PC-9 (cell line): ENCODE measurements at regions of chr3 and their contacts with region 1.

Region 1: DNA sequence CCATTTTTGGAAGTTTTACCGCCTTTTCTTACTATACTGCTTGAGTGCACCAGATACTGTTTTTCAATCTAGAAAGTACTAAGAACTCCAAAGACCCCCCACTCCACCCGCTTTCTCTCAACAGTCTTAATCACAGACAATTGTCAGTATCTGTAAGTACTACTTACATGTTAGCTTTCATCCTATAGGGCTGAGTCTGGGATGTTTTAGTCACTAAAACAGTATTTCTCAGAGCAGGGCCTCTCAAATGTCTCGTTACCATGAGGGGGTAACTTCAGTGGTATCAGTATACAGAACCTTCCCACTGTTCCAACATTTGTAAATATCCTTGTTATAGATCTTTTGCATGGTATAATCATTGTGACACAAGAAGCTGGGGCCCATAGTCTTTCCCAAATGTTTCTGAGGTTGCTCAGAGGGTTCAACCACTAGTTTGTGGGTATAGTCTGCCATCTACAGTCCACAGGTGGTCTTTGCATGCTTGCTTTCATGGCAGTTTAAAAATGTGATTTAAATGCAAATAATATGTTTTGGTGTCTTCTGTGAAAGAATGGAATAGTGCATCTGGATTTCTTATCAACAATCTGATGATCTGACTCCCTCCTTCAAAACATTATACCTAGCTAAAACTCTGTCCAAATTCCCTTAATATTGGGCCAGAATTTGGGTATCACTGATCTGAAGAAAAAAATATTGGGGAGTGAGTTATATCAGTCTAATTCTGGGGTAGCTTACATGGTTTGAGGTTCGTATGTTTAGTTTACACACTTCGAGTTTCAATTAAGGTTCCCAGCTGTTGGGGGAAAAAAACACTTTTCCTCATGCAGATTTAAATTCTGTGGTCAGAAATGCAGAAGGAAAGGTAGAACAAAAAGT is 18.0 kb upstream of the DNAJC13 start:
- DNase-seq: peak; percentile 42 to 43
- H3K4me3 ChIP-seq: no peak overlapping the region
- H3K27ac ChIP-seq: no peak overlapping the region
- H3K4me1 ChIP-seq: no peaks in the 10 kb centered on the region
- H3K27me3 ChIP-seq: no peaks in the 10 kb centered on the region
- CTCF ChIP-seq: peak; percentile 91

Region 2: GRCh38 chr3:131794766-131795388 is 604.4 kb before region 1 on chr3:
- CTCF ChIA-PET with region 1: no interaction called
- POLR2A ChIA-PET with region 1: no interaction called
- intact Hi-C with region 1: loop called (anchors 5 kb)
- DNase-seq: peak; percentile 32 to 44
- H3K4me3 ChIP-seq: no peak overlapping the region
- H3K27ac ChIP-seq: no peak overlapping the region
- H3K4me1 ChIP-seq: peaks cover 8% of the 10 kb centered on the region
- H3K27me3 ChIP-seq: no peaks in the 10 kb centered on the region
- CTCF ChIP-seq: peak; percentile 87

Region 3: GRCh38 chr3:132034486-132035464 is 364.5 kb before region 1 on chr3 and contains the start of gene CPNE4:
- CTCF ChIA-PET with region 1: no interaction called
- POLR2A ChIA-PET with region 1: no interaction called
- intact Hi-C with region 1: loop called (anchors 2 kb)
- DNase-seq: peak; percentile 71 to 89
- H3K4me3 ChIP-seq: peak within 1 kb of the TSS; percentile 52
- H3K27ac ChIP-seq: no peak within 1 kb of the TSS
- H3K4me1 ChIP-seq: no peaks in the 10 kb centered on the region
- H3K27me3 ChIP-seq: no peaks in the 10 kb centered on the region
- CTCF ChIP-seq: peak; percentile 89
- total RNA-seq, gene CPNE4: 0.10 and 0.22 TPM in 2 replicates

Region 4: DNA sequence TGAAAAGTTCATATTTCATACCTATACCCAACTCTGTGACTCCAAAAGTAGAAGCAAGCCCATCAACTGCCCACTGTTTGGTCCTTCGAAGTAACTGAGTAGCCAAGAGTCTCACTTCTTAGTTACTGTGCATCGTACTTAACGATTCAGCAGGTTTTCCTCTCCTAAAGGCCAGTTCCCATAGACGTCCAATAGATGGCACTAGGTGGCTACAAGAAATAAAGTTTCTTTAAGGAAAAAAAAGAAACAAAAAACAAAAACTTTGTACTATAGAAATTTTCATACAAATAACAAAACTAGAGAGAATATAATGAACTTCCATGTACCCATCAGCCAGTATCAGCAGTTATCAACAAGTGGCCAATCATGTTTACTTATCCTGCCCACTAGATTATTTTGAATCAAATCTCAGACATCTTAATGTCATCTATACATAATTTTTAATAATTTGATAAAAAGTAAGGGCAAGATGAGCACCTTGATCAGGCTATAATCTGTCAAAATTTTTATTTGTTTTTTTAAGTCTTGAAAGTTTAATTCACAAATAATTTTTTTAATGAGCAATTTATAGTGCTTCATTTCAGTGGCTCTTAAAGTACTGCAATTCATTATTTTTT is 145.9 kb before region 1 on chr3:
- CTCF ChIA-PET with region 1: interaction called, 3 read pairs
- POLR2A ChIA-PET with region 1: no interaction called
- intact Hi-C with region 1: loop called (anchors 1 kb)
- DNase-seq: peak; percentile 16 to 56
- H3K4me3 ChIP-seq: no peak overlapping the region
- H3K27ac ChIP-seq: no peak overlapping the region
- H3K4me1 ChIP-seq: peaks cover 34% of the 10 kb centered on the region
- H3K27me3 ChIP-seq: no peaks in the 10 kb centered on the region
- CTCF ChIP-seq: peak; percentile 83

Region 5: DNA sequence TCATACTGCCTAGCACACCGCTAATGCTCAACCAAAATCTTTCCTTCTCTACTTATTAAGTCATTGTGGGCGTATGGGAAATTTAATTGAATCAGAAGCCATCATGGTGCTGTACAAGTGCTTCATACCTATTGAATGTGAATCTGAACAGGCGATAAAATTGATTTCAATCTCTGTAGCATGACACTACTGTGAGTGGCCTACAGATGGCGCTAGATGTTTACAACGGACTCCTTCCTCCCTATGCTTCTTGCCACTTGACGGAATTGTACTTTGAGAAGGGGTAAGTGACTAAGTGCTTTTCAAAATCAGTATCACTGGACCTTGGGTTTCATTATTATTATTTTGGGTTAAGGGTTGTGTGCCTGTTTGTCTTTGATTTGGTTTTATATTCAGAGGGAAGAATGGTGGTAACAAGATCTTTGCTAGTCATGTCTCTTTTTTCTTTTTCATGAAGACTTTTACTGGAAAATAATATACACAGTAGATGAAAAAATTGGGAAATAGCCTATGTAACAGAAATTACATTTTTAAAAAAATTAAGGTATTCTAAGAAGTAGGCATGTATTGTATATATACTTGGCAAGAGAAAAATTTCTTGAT is 46.6 kb before region 1 on chr3:
- CTCF ChIA-PET with region 1: interaction called, 12 read pairs
- POLR2A ChIA-PET with region 1: no interaction called
- intact Hi-C with region 1: loop called (anchors 1 kb)
- DNase-seq: peak; percentile 53 to 55
- H3K4me3 ChIP-seq: no peak overlapping the region
- H3K27ac ChIP-seq: no peak overlapping the region
- H3K4me1 ChIP-seq: peaks cover 7% of the 10 kb centered on the region
- H3K27me3 ChIP-seq: no peaks in the 10 kb centered on the region
- CTCF ChIP-seq: peak; percentile 90

Region 6: GRCh38 chr3:132380920-132381319 is 18.4 kb before region 1 on chr3:
- CTCF ChIA-PET with region 1: no interaction called
- POLR2A ChIA-PET with region 1: no interaction called
- intact Hi-C with region 1: no loop called
- DNase-seq: no peak
- H3K4me3 ChIP-seq: no peak overlapping the region
- H3K27ac ChIP-seq: no peak overlapping the region
- H3K4me1 ChIP-seq: no peaks in the 10 kb centered on the region
- H3K27me3 ChIP-seq: no peaks in the 10 kb centered on the region
- CTCF ChIP-seq: no peak